HAP-1 (cell line): ENCODE measurements at regions of chr1 and their contacts with region 1.

Region 1: GRCh38 chr1:33094971-33095604 is 14.1 kb downstream of the AZIN2 start:
- DNase-seq: peak; percentile 60 to 84
- H3K4me3 ChIP-seq: no peak overlapping the region
- H3K4me1 ChIP-seq: no peaks in the 10 kb centered on the region
- H3K27me3 ChIP-seq: no peaks in the 10 kb centered on the region

Region 2: DNA sequence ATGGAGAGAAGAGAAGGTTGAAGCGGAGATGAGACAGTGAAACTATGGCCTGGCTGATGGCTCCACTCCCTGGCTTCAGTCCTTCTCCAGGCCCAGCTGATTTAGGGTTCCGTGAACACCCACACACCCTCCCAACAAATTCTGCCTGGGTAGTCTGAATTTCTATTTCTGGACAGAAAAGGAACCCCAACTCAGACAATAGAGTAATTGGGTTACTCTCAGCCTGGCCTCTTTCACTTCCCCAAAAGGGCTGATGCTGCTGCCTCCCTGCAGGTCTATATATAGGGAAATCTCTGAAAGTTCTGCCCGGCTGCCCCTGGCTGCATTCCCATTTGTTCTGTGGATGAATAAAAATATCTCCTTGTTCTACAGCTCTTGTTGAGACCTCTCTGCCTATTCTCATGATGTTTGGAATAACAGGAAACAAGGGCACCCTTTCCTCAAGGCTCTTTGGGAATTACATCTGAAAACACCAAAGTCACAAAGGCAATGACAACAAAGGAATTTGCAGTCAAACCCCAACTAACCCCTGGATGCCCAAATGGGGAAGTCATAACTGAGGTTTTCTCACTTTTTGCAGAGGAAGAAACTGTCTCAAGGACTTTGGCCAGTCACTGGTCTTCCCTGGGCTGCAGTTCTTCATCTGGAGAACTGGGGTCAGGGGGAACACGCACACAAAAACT is 366.0 kb after region 1 on chr1:
- in situ Hi-C with region 1: loop called (anchors 10 kb)
- DNase-seq: no peak
- H3K4me3 ChIP-seq: no peak overlapping the region
- H3K4me1 ChIP-seq: no peaks in the 10 kb centered on the region
- H3K27me3 ChIP-seq: no peaks in the 10 kb centered on the region